ENCODE measurements at regions of chr15 and their contacts with region 1.

Region 1: DNA sequence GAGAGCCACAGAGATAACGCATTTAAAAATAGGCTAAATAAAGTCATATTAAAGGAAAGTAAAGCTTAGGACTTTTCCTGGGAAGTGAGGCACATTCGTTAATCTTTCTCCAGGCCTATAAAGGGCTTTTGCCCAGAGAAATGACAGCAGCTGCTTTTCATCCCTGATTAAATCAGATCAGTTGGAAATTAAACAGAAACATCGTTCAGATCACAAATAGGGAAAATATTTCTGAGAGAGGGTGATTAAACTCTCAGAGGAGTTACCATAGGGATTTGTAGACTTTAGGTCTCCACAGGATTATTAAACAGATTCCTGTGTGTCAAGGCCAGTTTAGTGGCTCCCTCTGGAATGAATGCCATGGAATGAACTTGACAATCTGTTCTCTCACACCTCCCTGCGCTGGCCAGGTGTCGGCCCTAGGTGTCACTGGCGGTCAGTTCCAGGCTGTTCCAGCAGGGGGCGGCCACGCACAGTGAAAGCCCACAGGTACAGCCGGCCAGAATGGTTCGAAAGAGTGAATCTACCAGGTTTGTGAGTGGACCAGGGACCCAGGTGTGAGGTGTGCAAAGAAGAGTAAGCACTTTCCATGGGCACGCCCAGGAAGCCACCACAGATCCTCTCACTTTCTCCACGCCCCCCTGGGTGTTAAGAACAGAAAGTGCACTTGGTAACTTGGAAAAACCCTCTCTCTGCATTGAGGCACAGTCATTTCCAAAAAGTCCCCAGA is 253.0 kb upstream of the RASGRP1 start:
- DNase-seq: peak; percentile 74 to 81
- ATAC-seq: peak; percentile 85 to 96 (median 94)
- H3K4me3 ChIP-seq: peak overlapping the region in 1 of 10 donors; percentile 17
- H3K27ac ChIP-seq: no peak overlapping the region
- H3K4me1 ChIP-seq: peaks cover 0 to 9% (median 3%) of the 10 kb centered on the region in 9 donors
- H3K27me3 ChIP-seq: no peaks in the 10 kb centered on the region
- CTCF ChIP-seq: peak; percentile 96 to 100 (median 99)

Region 2: DNA sequence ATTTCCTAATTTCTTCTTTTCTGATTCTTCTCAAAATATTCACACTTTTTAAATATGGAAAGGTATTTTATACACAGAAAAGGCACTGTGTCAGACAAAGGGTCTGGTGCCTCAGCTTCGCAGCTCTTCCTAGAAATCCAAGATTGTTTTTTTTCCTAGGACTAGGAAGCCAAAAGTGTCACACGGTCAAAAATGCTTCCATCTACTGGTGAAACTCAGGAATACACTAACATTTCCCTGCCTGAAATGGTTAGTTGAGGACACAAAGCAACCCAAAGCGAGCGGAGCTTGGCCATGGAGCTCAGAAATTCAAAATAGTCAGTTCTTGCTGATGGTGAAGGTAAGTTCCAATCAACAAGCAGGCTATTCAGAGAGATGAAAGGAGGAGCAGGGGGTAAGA is 173.5 kb after region 1 on chr15:
- intact Hi-C with region 1: loop called in 6 of 10 experiments (anchors 2 to 10 kb)
- DNase-seq: no peak
- ATAC-seq: peak in 4 of 8 donors; percentile 27 to 47 (median 36)
- H3K4me3 ChIP-seq: no peak overlapping the region
- H3K27ac ChIP-seq: peak overlapping the region in 7 of 10 donors; percentile 30 to 64 (median 50)
- H3K4me1 ChIP-seq: peaks cover 0 to 30% (median 14%) of the 10 kb centered on the region in 9 donors
- H3K27me3 ChIP-seq: no peaks in the 10 kb centered on the region
- CTCF ChIP-seq: peak in 8 of 9 donors; percentile 20 to 63 (median 48)

Region 3: GRCh38 chr15:39028069-39028468 is 210.5 kb after region 1 on chr15:
- intact Hi-C with region 1: loop called in 2 of 10 experiments (anchors 10 kb)
- DNase-seq: no peak
- ATAC-seq: peak in 2 of 8 donors; percentile 34 to 95
- H3K4me3 ChIP-seq: no peak overlapping the region
- H3K27ac ChIP-seq: no peak overlapping the region
- H3K4me1 ChIP-seq: peaks cover 0 to 5% (median 0%) of the 10 kb centered on the region in 9 donors
- H3K27me3 ChIP-seq: no peaks in the 10 kb centered on the region
- CTCF ChIP-seq: no peak

Region 4: GRCh38 chr15:39171944-39172368 is 354.4 kb after region 1 on chr15:
- intact Hi-C with region 1: loop called in 2 of 10 experiments (anchors 10 kb)
- DNase-seq: peak in 1 of 2 donors; percentile 44
- ATAC-seq: peak; percentile 81 to 96 (median 90)
- H3K4me3 ChIP-seq: no peak overlapping the region
- H3K27ac ChIP-seq: peak overlapping the region in 6 of 10 donors; percentile 12 to 62 (median 29)
- H3K4me1 ChIP-seq: peaks cover 0 to 20% (median 9%) of the 10 kb centered on the region in 9 donors
- H3K27me3 ChIP-seq: no peaks in the 10 kb centered on the region
- CTCF ChIP-seq: peak in 7 of 9 donors; percentile 8 to 66 (median 55)

Measured in heart right ventricle (tissue), 16 donors.